Left colon (tissue), 2 donors: ENCODE measurements at regions of chr12 and their contacts with region 1.

Region 1: DNA sequence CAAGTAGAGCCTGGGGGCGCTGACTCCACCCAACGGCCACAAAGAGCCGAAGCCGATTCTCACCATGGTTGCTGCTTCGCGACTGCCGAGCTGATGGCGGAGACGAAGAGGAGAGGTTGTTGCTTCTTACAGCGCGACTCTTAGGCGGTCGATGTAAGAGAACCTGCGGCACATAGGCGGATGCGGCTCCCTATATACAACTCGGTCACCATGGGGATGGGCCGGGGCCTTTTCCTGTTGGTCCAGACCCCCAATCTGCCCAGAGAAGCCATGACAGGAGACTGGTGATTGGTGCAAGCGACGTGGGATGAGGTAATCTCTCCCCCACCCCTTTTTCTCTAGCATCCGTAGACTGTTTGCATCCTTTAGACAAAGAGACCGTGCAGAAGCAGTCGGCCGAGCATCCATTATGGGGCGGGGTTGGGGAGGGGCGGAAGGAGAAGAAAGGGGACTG is at the start of gene TUBA1A:
- DNase-seq: peak; percentile 84 to 90
- ATAC-seq: peak; percentile 76
- total RNA-seq, gene TUBA1A: 12.8 to 57.7 TPM

Region 2: DNA sequence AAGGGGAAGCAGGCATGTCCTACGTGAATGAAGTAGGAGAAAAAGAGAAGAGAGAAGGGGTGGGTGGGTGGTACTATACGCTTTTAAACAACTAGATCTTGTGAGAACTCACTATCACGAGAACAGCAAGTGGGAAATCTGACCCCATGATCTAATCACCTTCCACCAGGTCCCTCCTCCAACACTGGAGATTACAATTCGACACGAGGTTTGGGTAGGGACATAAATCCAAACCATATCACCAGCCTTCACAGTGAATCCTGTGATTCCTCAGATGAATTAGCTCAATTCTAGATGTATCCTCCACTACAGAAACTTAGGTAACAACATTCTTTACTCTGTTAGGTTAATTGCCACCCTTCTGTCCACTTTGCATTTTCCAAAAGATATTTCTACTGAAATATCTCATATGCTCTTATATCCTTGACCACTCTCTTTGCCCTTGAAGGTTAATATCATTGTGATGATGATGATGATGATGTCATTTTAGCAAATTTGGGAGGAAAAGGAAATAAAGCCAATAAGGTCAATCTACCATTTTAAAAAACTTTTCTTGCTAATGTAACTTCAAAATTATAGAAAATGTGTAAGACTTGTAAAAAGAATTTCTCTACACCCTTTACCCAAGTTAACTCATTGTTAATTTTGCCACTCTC is 449.2 kb before region 1 on chr12:
- intact Hi-C with region 1: no loop called
- DNase-seq: no peak
- ATAC-seq: no peak

Region 3: DNA sequence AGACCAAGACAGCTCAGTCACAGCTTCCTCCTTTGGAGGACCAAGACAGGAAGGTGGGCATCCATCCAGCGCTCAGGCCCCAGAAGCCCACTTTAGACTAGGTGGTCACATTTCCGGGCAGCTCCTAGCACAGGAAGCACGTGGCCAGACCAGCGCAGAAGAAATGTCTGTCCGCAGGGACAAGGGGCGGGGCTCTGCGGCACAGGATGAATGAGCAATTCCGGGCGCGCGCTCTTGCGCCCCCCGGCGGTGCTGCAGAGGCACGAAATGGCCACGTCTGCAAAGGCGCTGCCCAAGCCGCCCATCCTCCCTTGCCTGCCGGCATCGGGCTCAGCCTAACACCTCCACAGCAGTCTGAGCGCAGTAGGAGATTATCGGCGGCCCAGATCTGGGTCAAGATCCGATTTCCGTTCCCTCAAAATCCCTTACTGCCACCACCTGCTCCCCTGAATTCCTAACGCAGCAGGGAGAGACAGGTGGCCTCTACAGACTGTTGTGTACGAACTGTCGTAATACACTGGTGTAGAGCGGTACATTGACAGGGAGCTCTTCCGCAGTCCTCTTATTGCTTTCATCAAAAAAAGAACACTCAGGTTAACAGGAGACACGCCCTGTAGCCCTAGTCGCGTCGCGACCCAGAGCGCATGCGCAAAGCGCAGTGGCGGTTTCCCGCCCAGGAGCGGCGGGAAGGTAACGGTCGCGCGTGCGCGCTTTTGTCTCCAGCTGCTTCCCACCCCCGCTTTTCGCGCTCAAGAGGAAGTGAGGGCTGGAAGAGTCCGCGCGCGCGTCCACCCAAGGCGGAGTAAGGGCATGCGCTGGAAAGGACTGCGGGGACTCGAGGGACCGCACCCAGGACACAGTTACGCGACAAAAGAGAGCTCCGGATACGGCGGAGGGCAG is 58.5 kb before region 1 on chr12:
- intact Hi-C with region 1: loop called in 1 of 2 experiments (anchors 5 kb)
- DNase-seq: peak; percentile 95 to 96
- ATAC-seq: peak; percentile 76

Region 4: GRCh38 chr12:49662998-49663843 is 474.3 kb after region 1 on chr12:
- intact Hi-C with region 1: no loop called
- DNase-seq: peak; percentile 50 to 59
- ATAC-seq: peak; percentile 59